GM12878 (cell line): ENCODE measurements at regions of chr6 and their contacts with region 1.

Region 1: GRCh38 chr6:138970856-138971425 is 17.1 kb downstream of the REPS1 start:
- DNase-seq: no peak
- ATAC-seq: peak; percentile 80
- H3K4me3 ChIP-seq: no peak overlapping the region
- H3K27ac ChIP-seq: no peak overlapping the region
- H3K4me1 ChIP-seq: peaks cover 16% of the 10 kb centered on the region
- H3K27me3 ChIP-seq: no peaks in the 10 kb centered on the region
- CTCF ChIP-seq: no peak
- EP300 ChIP-seq: no peak
- POLR2A ChIP-seq: no peak
- RAD21 ChIP-seq: no peak

Region 2: DNA sequence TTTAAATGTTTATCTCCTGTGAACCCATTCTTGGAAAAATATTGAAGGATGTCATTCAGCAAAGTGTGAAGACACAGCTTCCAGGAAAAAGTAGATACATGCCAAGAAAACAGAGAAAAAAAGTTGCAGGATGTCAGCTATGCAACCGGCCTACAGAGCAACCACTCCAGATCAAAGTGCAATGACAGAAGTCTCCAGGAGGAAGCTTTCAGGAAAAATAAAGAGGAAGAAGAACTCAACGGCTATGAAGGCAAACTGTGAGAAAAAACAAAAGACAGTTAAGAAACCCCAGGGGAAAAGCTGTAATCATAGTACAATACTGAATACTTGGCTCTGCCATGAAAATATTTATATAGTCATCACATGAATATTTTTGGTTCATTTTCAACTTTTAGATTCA is 13.5 kb before region 1 on chr6:
- CTCF ChIA-PET with region 1: interaction called, 13 read pairs
- POLR2A ChIA-PET with region 1: interaction called, 8 read pairs
- RAD21 ChIA-PET with region 1: interaction called, 7 read pairs
- SMC1A ChIA-PET with region 1: interaction called, 24 read pairs
- in situ Hi-C with region 1: no loop called
- intact Hi-C with region 1: no loop called
- DNase-seq: no peak
- ATAC-seq: peak; percentile 62
- H3K4me3 ChIP-seq: no peak overlapping the region
- H3K27ac ChIP-seq: no peak overlapping the region
- H3K4me1 ChIP-seq: no peaks in the 10 kb centered on the region; the same call in 1 of the 2 replicates
- H3K27me3 ChIP-seq: no peaks in the 10 kb centered on the region
- CTCF ChIP-seq: no peak
- EP300 ChIP-seq: no peak
- POLR2A ChIP-seq: no peak
- RAD21 ChIP-seq: no peak

Region 3: DNA sequence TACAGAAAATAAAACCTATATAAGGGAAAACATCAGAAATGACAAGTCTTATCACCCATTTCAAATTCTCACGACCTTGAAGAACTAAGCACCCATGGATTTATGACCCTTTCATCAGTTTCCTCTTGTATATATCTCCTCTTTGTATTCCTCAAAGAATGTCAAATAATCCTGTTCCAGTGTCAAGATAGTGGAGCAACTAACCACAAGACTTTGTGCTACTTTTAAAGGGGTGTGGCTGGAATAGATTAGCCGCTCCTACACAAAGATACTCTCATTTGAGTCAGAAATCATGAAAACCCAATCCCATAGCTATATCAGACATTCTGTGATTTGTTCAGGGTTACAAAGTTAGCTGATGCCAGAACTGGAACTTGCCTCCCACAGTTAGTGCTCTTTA is 10.5 kb after region 1 on chr6:
- CTCF ChIA-PET with region 1: interaction called, 9 read pairs
- POLR2A ChIA-PET with region 1: interaction called, 21 read pairs
- RAD21 ChIA-PET with region 1: interaction called, 11 read pairs
- SMC1A ChIA-PET with region 1: interaction called, 30 read pairs
- in situ Hi-C with region 1: no loop called
- intact Hi-C with region 1: no loop called
- DNase-seq: no peak
- ATAC-seq: no peak
- H3K4me3 ChIP-seq: no peak overlapping the region
- H3K27ac ChIP-seq: no peak overlapping the region
- H3K4me1 ChIP-seq: peaks cover 9% of the 10 kb centered on the region; the same call in 1 of the 2 replicates
- H3K27me3 ChIP-seq: no peaks in the 10 kb centered on the region
- CTCF ChIP-seq: no peak
- EP300 ChIP-seq: no peak
- POLR2A ChIP-seq: no peak
- RAD21 ChIP-seq: no peak

Region 4: GRCh38 chr6:139124887-139125672 is 154.1 kb after region 1 on chr6:
- CTCF ChIA-PET with region 1: no interaction called
- POLR2A ChIA-PET with region 1: interaction called, 12 read pairs
- RAD21 ChIA-PET with region 1: no interaction called
- SMC1A ChIA-PET with region 1: no interaction called
- in situ Hi-C with region 1: no loop called
- intact Hi-C with region 1: no loop called
- DNase-seq: peak; percentile 54
- ATAC-seq: peak; percentile 100
- H3K4me3 ChIP-seq: no peak overlapping the region
- H3K27ac ChIP-seq: no peak overlapping the region
- H3K4me1 ChIP-seq: peaks cover 4% of the 10 kb centered on the region; the same call in 1 of the 2 replicates
- H3K27me3 ChIP-seq: no peaks in the 10 kb centered on the region
- CTCF ChIP-seq: peak; percentile 51 to 75 (median 66); a peak in 5 of 6 replicates
- EP300 ChIP-seq: 0 out of 4 replicates have a peak, but pooled peaks of 1 of the 2 experiments have one; percentile 41
- POLR2A ChIP-seq: no peak
- RAD21 ChIP-seq: peak; percentile 78